BJ (cell line): ENCODE measurements at regions of chr3 and their contacts with region 1.

Region 1: GRCh38 chr3:124905849-124906248 is 18.7 kb upstream of the ITGB5 start:
- DNase-seq: no peak
- H3K4me3 ChIP-seq: no peak overlapping the region
- H3K27me3 ChIP-seq: peaks cover 4% of the 10 kb centered on the region; the same call in 1 of the 2 replicates
- CTCF ChIP-seq: no peak; the same call in 1 of the 2 replicates

Region 2: DNA sequence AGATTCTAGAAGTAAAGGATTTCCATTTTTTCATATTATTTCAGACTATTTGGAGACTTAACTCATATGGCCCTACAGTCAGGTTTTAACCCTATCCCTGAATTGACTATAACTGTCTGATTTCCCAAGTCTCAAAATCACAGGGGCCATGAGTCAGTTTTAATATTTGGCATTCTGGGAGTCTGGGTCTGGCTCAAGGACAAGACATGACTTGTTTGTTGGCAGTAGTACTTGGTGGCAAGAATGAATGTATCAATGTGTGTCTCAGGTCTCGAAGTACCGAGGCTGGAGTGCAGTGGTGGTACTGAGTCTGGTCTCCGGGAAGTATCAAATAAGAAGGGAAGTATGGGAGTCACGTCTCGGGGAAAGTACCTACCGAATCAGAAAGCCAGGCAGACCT is 164.8 kb before region 1 on chr3:
- CTCF ChIA-PET with region 1: interaction called, 12 read pairs
- POLR2A ChIA-PET with region 1: no interaction called
- DNase-seq: no peak
- H3K4me3 ChIP-seq: no peak overlapping the region
- H3K27me3 ChIP-seq: no peaks in the 10 kb centered on the region
- CTCF ChIP-seq: no peak

Region 3: GRCh38 chr3:124768812-124769211 is 137.0 kb before region 1 on chr3:
- CTCF ChIA-PET with region 1: interaction called, 223 read pairs
- POLR2A ChIA-PET with region 1: no interaction called
- DNase-seq: no peak
- H3K4me3 ChIP-seq: no peak overlapping the region
- H3K27me3 ChIP-seq: no peaks in the 10 kb centered on the region
- CTCF ChIP-seq: no peak

Region 4: DNA sequence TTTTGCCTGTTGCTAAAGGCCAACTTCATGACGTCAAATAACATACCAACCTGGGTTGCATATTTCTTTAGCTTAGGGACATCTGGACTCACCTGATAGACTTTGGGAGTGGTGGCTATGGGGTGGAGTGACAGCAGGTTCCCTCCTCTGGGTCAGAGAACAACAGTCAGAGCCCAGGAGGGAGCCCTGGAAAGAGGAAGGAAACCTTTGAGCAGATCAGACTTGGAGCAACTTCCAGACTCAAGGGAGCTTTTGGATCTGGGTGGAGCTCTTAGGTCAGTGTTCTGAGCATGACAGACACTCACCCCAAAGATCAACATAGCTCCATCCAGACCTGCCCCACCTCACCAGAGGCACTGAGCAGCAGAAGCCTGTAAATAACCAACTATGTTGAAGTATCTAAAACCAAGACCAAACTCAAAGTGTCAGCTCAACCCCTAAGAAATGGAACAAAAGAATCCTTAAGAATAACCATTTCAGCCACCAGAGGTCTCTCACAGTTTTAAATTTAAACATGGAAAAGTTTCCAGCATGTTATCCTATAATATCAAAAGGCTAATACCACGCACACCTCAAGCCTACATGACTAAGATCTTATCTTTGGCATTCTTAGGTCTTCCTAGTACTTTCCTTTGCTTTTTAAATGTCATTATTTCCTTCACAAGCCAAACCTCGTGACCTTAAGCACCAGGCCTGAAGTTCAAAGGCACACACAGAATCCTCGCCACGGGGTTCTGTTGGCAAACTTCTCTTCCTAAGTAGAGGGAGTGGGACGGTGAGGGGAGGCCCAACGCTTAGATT is 119.2 kb before region 1 on chr3:
- CTCF ChIA-PET with region 1: interaction called, 79 read pairs
- POLR2A ChIA-PET with region 1: no interaction called
- DNase-seq: no peak
- H3K4me3 ChIP-seq: no peak overlapping the region
- H3K27me3 ChIP-seq: no peaks in the 10 kb centered on the region
- CTCF ChIP-seq: peak; percentile 45

Region 5: GRCh38 chr3:124845406-124845805 is 60.4 kb before region 1 on chr3:
- CTCF ChIA-PET with region 1: interaction called, 13 read pairs
- POLR2A ChIA-PET with region 1: no interaction called
- DNase-seq: peak; percentile 92
- H3K4me3 ChIP-seq: no peak overlapping the region
- H3K27me3 ChIP-seq: no peaks in the 10 kb centered on the region
- CTCF ChIP-seq: no peak

Region 6: DNA sequence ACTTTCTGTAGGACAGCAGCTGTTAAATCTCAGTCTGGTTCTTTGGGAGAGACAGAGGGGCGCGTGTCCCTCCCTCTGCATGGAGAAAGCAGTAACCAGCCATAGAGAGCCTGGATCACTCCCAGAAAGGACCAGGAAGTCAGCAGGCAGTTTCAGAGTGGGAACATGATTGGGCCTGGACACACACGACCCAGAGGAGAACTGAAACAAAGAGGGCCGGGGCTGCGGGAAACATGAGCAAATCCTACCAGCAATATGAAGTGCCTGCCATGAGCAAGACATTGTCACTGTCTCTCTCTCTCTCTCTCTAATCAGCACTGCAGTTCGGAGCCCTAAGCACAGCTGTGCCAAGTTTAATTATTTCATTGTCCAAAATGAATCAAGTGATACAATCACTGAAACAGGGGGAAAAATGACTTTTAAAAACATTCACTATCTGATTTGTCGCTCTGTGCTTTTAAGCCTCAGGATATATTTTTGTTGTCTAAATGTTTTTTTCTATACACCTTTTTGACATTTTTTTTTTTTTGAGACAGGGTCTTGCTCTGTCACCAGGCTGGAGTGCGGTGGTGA is 11.1 kb after region 1 on chr3:
- CTCF ChIA-PET with region 1: interaction called, 16 read pairs
- POLR2A ChIA-PET with region 1: no interaction called
- DNase-seq: no peak
- H3K4me3 ChIP-seq: no peak overlapping the region
- H3K27me3 ChIP-seq: peaks cover 6% of the 10 kb centered on the region; the same call in 1 of the 2 replicates
- CTCF ChIP-seq: no peak